ENCODE measurements at regions of chr10 and their contacts with region 1.

Region 1: DNA sequence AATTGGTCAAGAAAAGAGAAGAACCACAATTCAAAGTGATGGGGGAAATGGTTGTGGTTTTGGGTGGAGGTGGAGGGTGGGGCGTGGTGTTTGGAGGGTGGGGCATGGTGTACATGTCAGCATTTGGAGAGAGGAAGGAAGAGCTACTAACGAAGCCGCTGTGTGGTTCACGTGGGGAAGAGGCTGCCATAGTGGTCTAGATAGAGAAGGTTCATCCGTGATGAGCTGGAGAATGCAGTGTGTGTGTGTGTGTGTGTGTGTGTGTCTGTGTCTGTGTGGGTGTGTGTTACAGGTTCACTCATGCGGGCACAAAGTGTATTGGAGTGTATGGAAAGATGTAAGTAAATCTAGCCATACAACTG is 6.1 kb upstream of the VCL start:
- DNase-seq: peak; percentile 52 to 88 (median 82)
- ATAC-seq: peak; percentile 100
- H3K4me3 ChIP-seq: no peak overlapping the region
- H3K4me3 Mint-ChIP-seq: peak overlapping the region in 2 of 3 donors; percentile 7 to 29
- H3K27ac ChIP-seq: peak overlapping the region; percentile 49
- H3K27ac Mint-ChIP-seq: peak overlapping the region; percentile 16 to 51
- H3K4me1 ChIP-seq: peaks cover 10 to 33% of the 10 kb centered on the region in 2 experiments
- H3K4me1 Mint-ChIP-seq: peaks cover 28 to 40% (median 37%) of the 10 kb centered on the region in 3 donors
- H3K27me3 ChIP-seq: no peaks in the 10 kb centered on the region
- H3K27me3 Mint-ChIP-seq: no peaks in the 10 kb centered on the region

Region 2: GRCh38 chr10:73956476-73957359 is 35.1 kb before region 1 on chr10:
- CTCF ChIA-PET with region 1: interaction called, 3 to 13 read pairs
- POLR2A ChIA-PET with region 1: interaction called, 3 read pairs
- DNase-seq: peak in 30 of 35 experiments; percentile 4 to 66 (median 22)
- ATAC-seq: peak; percentile 74 to 83 (median 79)
- H3K4me3 ChIP-seq: peak overlapping the region; percentile 17 to 25
- H3K4me3 Mint-ChIP-seq: peak overlapping the region; percentile 47 to 70 (median 67)
- H3K27ac ChIP-seq: peak overlapping the region; percentile 78
- H3K27ac Mint-ChIP-seq: peak overlapping the region; percentile 91 to 97
- H3K4me1 ChIP-seq: peaks cover 15 to 57% of the 10 kb centered on the region in 2 experiments
- H3K4me1 Mint-ChIP-seq: peaks cover 48 to 61% (median 54%) of the 10 kb centered on the region in 3 donors
- H3K27me3 ChIP-seq: no peaks in the 10 kb centered on the region
- H3K27me3 Mint-ChIP-seq: no peaks in the 10 kb centered on the region

Region 3: DNA sequence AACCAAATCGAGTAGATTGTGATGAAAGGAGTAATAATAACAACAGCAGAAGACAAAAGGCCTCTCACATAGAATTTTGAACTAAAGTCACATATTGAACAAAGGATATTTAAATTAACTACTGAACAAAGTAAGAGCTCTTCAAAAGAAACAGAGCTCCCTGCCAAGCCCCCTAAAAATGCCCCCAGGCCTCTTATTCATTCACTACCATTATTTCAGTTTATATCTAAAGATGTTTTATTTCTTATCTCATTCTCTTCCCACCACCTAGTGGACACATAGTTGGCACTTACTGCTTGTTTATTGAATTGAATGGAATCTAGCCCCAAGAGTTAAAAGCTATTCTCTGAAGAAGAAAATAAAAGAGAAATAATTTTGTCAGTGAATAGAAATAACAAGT is 43.4 kb after region 1 on chr10:
- CTCF ChIA-PET with region 1: no interaction called
- POLR2A ChIA-PET with region 1: interaction called, 3 to 10 read pairs
- DNase-seq: peak in 1 of 35 experiments; percentile 44
- ATAC-seq: no peak
- H3K4me3 ChIP-seq: no peak overlapping the region
- H3K4me3 Mint-ChIP-seq: no peak overlapping the region
- H3K27ac ChIP-seq: peak overlapping the region; percentile 21
- H3K27ac Mint-ChIP-seq: peak overlapping the region; percentile 13 to 79
- H3K4me1 ChIP-seq: peaks cover 0 to 8% of the 10 kb centered on the region in 2 experiments
- H3K4me1 Mint-ChIP-seq: peaks cover 43 to 52% (median 46%) of the 10 kb centered on the region in 3 donors
- H3K27me3 ChIP-seq: no peaks in the 10 kb centered on the region
- H3K27me3 Mint-ChIP-seq: no peaks in the 10 kb centered on the region

Region 4: DNA sequence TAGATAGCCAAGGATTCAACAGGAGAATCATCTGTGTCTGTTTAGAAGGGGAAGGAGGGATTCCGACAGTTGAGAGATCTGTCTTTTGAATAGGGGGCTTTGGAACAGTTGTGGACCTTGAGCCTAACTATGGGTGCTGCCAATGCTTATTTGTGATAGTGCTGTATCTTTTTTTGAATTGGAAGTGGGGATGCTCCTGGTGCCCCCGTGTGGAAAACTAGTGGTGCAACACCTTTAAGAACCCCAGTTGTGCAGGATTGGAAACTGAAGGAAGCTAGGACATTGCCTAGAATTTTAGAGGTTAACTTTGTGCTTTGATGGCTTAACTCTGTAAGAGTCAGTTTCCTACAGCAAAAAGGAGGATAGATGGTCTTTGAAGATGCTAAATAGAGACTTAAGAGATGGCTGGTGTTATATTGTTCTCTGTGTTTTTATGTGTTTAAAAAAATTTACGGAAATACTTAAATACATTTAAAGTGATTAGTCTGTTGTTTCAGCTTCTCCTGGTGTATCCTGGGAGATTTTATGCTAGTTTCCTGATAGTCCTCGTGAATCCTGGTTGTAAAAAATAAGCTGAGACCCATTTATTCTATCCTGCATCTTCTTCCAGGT is 89.4 kb after region 1 on chr10:
- CTCF ChIA-PET with region 1: interaction called in 1 of 2 experiments, 13 read pairs
- POLR2A ChIA-PET with region 1: no interaction called
- DNase-seq: peak in 25 of 35 experiments; percentile 6 to 66 (median 23)
- ATAC-seq: peak; percentile 53 to 73 (median 63)
- H3K4me3 ChIP-seq: no peak overlapping the region
- H3K4me3 Mint-ChIP-seq: no peak overlapping the region
- H3K27ac ChIP-seq: no peak overlapping the region
- H3K27ac Mint-ChIP-seq: peak overlapping the region in 1 of 2 donors; percentile 29
- H3K4me1 ChIP-seq: no peaks in the 10 kb centered on the region
- H3K4me1 Mint-ChIP-seq: peaks cover 9 to 38% (median 31%) of the 10 kb centered on the region in 3 donors
- H3K27me3 ChIP-seq: no peaks in the 10 kb centered on the region
- H3K27me3 Mint-ChIP-seq: no peaks in the 10 kb centered on the region

Region 5: DNA sequence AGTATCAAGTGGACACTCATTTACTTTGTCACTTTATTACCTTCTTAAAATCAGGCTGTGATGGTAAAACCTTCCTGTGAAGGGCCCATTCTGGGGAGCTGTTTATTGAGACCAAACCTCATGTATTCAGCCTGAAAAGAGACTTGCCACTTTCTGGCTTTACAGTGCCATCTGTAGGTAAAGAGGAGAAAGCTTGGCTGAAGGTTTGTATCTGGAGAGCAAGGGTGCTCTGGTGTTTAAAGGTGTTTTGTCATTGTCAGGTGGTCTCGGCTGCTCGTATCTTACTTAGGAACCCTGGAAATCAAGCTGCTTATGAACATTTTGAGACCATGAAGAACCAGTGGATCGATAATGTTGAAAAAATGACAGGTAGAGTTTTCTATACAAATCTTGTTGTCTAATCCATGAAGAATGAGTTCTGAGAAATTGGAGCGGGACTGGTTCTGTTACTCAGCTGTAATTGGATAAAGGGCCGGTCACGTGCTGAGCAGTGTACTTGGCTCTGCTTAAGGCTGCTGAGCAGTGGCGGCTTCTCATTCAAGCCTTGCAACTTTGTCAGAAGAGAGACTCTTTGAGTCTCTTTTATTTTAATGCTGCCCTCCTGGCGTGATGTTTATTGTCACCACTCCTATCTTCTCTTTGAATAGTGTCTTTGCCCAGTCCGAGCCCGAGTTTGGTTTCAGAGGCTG is 111.8 kb after region 1 on chr10:
- CTCF ChIA-PET with region 1: no interaction called
- POLR2A ChIA-PET with region 1: no interaction called
- DNase-seq: peak in 1 of 35 experiments; percentile 24
- ATAC-seq: no peak
- H3K4me3 ChIP-seq: no peak overlapping the region
- H3K4me3 Mint-ChIP-seq: no peak overlapping the region
- H3K27ac ChIP-seq: no peak overlapping the region
- H3K27ac Mint-ChIP-seq: no peak overlapping the region
- H3K4me1 ChIP-seq: no peaks in the 10 kb centered on the region
- H3K4me1 Mint-ChIP-seq: peaks cover 0 to 3% (median 0%) of the 10 kb centered on the region in 3 donors
- H3K27me3 ChIP-seq: no peaks in the 10 kb centered on the region
- H3K27me3 Mint-ChIP-seq: no peaks in the 10 kb centered on the region